ENCODE measurements at regions of chr11 and their contacts with region 1.

Region 1: GRCh38 chr11:43825217-43825816 is 55.3 kb upstream of the ALKBH3 start:
- DNase-seq: no peak
- H3K4me3 ChIP-seq: no peak overlapping the region
- CTCF ChIP-seq: peak; percentile 66

Region 2: GRCh38 chr11:43779306-43779705 is 46.0 kb before region 1 on chr11:
- CTCF ChIA-PET with region 1: no interaction called
- POLR2A ChIA-PET with region 1: no interaction called
- DNase-seq: no peak
- H3K4me3 ChIP-seq: no peak overlapping the region
- CTCF ChIP-seq: no peak

Region 3: DNA sequence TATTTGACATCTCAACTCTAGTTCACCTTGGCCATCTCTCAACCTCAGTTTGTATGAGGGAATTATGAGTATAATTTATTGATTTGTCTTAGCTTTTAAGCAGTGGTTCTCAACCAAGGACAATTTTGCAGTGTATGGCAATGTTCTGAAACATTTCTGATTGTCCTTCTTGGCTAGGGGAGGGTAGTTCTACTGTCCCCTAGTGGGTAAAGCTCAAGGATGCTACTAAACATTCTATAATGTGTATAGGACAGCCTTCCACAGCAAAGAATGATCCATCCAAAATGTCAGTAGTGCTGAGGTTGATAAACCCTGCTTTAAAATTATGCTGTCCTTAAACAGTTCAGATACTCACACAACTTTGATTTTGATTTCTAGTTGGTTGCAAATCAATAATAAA is 22.8 kb before region 1 on chr11:
- CTCF ChIA-PET with region 1: interaction called, 26 read pairs
- POLR2A ChIA-PET with region 1: interaction called, 3 read pairs
- DNase-seq: no peak
- H3K4me3 ChIP-seq: no peak overlapping the region
- CTCF ChIP-seq: peak; percentile 25

Region 4: GRCh38 chr11:43810929-43811596 is 14.3 kb before region 1 on chr11:
- CTCF ChIA-PET with region 1: interaction called, 26 read pairs
- POLR2A ChIA-PET with region 1: no interaction called
- DNase-seq: no peak
- H3K4me3 ChIP-seq: no peak overlapping the region
- CTCF ChIP-seq: no peak

Region 5: GRCh38 chr11:43842021-43842420 is 16.7 kb after region 1 on chr11:
- CTCF ChIA-PET with region 1: interaction called, 35 read pairs
- POLR2A ChIA-PET with region 1: no interaction called
- DNase-seq: no peak
- H3K4me3 ChIP-seq: no peak overlapping the region
- CTCF ChIP-seq: no peak

Measured in AG04449 (cell line).